HepG2 (cell line): ENCODE measurements at regions of chr1 and their contacts with region 1.

Region 1: GRCh38 chr1:156445789-156446263 is 54.7 kb downstream of the MEF2D start:
- DNase-seq: peak; percentile 83
- ATAC-seq: peak; percentile 98
- H3K4me3 ChIP-seq: peak overlapping the region in 1 of 3 experiments; percentile 30; a peak in 1 of 6 replicates
- H3K27ac ChIP-seq: no peak overlapping the region
- H3K4me1 ChIP-seq: no peaks in the 10 kb centered on the region
- H3K27me3 ChIP-seq: peaks cover 0 to 30% of the 10 kb centered on the region in 2 experiments; a peak in 3 of 5 replicates
- CTCF ChIP-seq: peak; percentile 96
- EP300 ChIP-seq: no peak
- POLR2A ChIP-seq: no peak
- RAD21 ChIP-seq: peak; percentile 93

Region 2: GRCh38 chr1:155070721-155071569 is 1374.9 kb before region 1 on chr1:
- CTCF ChIA-PET with region 1: no interaction called
- POLR2A ChIA-PET with region 1: no interaction called
- in situ Hi-C with region 1: no loop called
- intact Hi-C with region 1: no loop called
- DNase-seq: peak; percentile 72
- ATAC-seq: peak; percentile 92
- H3K4me3 ChIP-seq: peak overlapping the region; percentile 10 to 63 (median 30); a peak in 5 of 6 replicates
- H3K27ac ChIP-seq: no peak overlapping the region
- H3K4me1 ChIP-seq: peaks cover 19% of the 10 kb centered on the region
- H3K27me3 ChIP-seq: peaks cover 5 to 41% of the 10 kb centered on the region in 2 experiments
- CTCF ChIP-seq: peak; percentile 71
- EP300 ChIP-seq: no peak
- POLR2A ChIP-seq: 0 out of 4 replicates have a peak, but pooled peaks of 1 of the 2 experiments have one; percentile 31
- RAD21 ChIP-seq: no peak

Region 3: DNA sequence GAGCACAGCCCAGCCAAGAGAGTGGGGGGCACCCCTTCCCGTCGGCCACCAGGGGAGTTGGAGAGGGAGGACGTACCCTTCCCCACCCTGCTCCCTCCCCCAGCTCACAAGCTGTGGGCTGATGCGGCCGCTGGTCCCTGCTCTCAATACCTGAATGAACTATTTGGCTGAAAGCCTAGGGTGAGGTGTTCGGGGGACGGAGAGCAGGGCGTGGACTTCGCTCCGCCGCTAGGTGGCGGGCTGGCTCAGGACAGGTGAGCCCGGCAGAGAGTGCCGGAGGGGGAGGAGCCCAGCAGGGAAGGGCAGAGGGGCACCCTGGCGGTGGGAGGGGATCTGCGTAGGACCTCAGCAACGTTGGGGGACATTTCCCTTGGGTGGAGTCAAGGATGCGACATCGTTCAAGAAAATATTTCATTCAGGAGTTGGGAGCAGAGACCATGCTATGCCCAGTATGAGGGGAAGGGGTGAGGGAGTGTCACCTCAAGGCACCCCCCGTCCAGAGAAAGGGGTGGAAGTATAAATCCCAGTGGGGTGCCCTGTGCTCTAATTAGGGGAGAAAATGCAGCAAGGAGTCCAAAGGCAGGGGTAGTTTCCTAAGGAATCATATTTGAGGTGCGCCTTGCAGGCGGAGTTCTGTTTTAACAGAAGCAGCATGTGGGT is 88.8 kb before region 1 on chr1:
- CTCF ChIA-PET with region 1: interaction called, 26 read pairs
- POLR2A ChIA-PET with region 1: no interaction called
- in situ Hi-C with region 1: loop called (anchors 10 kb)
- intact Hi-C with region 1: loop called (anchors 1 kb)
- DNase-seq: peak; percentile 73
- ATAC-seq: peak; percentile 98
- H3K4me3 ChIP-seq: peak overlapping the region in 2 of 3 experiments; percentile 13 to 47; a peak in 2 of 6 replicates
- H3K27ac ChIP-seq: no peak overlapping the region
- H3K4me1 ChIP-seq: peaks cover 44% of the 10 kb centered on the region
- H3K27me3 ChIP-seq: no peaks in the 10 kb centered on the region
- CTCF ChIP-seq: peak; percentile 100
- EP300 ChIP-seq: no peak
- POLR2A ChIP-seq: no peak
- RAD21 ChIP-seq: peak; percentile 93